ENCODE measurements at regions of chr9 and their contacts with region 1.

Region 1: DNA sequence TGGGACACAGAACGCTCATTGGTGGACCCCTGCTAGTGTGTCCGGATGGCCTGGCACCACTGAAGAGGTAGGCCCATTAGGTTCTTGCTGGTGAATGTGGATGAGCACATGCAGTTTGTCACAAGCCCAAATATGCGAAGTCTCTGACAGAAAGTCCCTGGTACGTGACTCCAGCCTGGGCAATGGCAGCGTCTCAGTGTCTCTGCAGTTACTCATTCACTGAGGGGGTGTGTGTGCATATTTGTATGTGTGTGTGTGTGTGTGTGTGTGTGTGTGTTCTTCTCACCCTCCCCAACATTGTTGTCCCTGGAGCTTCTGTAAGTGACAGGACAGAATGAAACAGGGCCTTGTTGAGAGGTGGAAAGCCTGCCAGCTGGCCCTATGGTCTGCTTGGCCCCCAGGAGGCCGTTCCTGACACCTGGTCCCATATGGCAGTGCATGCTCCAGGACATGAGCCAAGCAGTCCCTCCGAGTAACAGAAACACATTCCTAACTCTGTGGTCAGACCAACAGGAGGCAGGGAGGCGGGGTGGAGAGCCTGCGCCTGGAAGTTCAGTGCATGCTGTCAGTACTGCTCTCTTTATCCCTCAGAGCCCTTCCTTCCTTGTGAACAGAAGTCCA is 169.9 kb downstream of the SLC28A3 start:
- DNase-seq: peak; percentile 91
- ATAC-seq: peak; percentile 98

Region 2: GRCh38 chr9:83754383-83754977 is 416.2 kb before region 1 on chr9:
- intact Hi-C with region 1: no loop called
- DNase-seq: no peak
- ATAC-seq: no peak

Region 3: DNA sequence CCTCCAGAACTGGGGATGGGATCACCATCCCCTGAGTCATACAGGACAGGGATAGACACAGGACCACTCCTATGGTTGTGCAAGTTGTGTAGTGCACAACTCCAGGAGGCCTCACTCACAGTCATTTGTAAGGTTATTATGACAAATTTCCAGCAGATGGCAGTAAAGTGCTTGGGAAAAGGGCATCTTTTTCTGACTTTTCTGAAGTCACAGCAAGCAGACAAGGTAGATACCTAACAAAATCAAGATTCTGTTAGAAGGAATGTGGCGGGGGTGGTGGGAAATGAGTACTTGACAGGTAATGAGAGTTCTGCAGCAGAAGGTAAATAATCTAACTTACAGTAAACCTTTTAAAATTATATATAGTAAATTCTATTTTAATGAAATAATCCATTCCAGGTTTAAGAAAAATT is 232.7 kb before region 1 on chr9:
- intact Hi-C with region 1: loop called (anchors 5 kb)
- DNase-seq: no peak
- ATAC-seq: no peak

Region 4: DNA sequence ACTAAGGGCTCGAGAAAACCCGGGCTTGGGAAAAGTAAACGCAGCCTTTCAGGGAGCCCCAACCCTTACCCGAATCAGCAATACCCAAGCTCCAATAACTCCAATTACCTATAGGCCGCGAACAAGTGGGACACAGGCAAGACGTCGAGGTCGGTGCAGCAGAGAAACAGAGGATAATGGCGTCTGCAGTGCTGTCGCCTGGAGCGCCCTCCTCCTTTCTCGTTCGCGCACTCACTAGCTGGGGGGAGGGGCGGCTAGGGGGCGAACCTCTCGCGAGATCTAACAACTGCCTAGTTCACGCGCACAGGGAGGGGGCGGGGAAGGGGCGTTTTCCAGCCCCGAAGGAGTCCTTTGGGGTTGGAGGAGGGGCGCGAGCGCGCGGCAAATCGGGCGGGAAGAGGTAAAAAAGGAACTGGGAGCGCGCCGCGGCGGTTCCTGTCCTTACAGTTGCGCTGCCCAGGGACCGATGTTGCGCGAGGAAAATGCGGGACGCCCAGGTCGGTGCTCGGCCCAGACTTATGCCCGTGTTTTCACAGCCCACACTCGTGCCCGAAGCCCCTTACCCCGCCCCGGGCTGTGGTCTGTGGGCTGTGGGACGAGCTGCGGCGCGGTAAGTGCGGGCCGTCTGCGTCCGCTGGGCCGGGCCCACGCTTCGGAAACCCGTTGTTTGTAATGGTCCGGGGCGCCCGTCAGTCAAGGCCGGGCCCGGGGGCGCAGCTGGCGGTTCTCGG is 190.1 kb before region 1 on chr9 and contains the start of gene RMI1:
- intact Hi-C with region 1: loop called (anchors 2 kb)
- DNase-seq: peak; percentile 99
- ATAC-seq: peak; percentile 95
- total RNA-seq, gene RMI1: 7.3 TPM

Region 5: GRCh38 chr9:84061594-84062193 is 108.9 kb before region 1 on chr9:
- intact Hi-C with region 1: loop called (anchors 5 kb)
- DNase-seq: no peak
- ATAC-seq: peak; percentile 88

Region 6: DNA sequence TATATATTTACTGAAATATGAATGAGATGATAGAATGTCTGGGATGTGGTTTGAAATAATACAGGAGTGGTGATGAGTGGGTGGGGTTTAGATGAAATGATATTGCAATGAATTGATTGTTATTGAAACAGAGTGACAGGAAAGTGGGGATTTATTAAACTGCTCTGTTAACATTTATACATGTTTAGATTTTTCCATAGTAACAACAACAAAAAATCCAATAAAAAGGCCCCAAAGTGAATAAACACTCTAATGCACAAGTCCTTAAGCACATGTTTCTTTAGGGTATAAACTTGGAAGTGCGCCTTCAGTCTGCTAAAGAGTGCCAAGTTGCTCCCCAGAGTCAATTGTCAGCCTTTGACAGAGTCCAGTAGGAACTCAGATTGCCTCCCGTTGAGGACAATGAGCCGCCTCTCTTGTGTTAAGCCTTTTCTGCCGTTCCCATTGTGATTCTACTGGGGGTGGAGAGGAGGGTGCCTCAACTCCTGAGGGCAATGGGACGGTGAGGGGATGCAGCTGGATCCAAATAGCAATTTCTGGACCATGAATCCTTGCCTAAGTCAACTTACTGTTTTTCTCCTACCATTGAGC is 57.6 kb after region 1 on chr9:
- intact Hi-C with region 1: loop called (anchors 5 kb)
- DNase-seq: no peak
- ATAC-seq: no peak

Region 7: DNA sequence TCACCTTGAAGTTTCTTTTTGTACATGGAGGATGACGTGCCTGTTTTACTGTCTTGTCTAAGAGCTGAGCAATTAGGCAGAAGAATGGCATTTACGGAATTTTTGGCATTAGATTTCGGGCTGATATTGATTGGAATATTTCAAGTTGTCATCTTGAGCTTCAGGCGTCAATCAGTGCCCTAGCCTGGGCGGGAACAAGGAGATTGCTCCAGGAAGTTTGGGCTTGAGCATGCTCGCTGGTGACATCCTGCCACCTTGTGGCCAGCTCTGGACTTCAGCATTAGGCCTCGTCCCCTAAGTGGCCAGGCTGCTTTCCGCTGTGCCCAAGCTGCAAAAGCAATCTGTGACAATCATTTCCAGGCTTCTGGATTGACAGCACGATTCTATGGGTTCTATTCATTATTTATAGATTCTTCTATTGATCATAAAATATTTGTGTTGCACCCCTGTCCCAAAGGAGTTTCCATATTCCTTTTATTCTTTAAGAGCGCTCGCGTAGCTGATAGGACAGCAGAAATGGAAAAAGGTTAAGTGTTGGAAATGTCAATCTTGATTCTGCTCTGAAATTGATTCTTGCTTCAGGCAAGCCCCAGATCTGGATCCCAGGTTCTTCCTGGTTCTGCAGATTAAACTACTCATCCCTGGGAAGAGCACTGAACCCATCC is 90.6 kb after region 1 on chr9:
- intact Hi-C with region 1: loop called (anchors 5 kb)
- DNase-seq: peak; percentile 87
- ATAC-seq: peak; percentile 94

Measured in Right ventricle myocardium inferior (tissue), 1 donor.